ENCODE measurements at regions of chr3 and their contacts with region 1.

Region 1: DNA sequence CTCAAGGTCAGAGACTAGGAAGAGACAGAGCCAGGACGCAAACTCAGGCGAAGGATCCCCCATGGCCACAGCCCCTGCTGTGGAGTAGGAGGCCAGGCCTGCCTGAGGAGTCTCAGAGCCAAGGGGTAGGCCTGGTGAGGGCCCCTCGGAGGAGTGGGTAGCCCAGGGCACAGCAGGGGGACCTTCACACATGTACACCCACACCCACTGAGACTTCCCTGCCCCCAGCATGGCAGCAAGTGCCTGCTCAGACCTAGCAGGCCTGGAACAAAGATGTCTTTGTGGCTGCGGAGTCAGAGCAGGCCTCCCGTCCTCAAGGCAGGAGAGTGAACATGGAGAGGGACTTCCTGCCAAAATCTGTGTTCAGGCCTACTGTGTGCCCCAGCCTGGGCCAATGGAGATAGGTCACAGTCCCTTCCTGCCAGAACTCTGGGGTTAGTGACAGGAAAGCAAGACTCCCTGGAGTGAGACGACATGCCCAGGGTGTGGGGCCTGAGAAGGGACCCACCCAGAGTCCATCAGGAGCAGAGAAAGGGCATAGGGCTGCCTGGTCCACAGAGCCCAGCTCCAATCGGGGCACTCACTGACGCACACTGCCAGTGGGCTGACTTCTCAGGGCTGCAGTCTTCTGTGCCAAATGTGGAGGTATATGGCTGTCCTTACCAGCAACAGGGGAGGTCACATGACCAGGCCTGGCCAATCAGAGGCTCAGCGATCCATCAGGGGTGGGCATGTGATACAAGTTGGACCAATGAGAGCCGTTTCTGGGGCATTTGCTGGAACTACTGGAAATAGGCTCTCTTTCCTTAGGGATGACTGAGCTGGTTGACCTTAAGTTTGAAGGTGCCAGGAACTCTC is 2.3 kb downstream of the GRIP2 start:
- DNase-seq: no peak
- H3K4me3 ChIP-seq: no peak overlapping the region
- CTCF ChIP-seq: no peak

Region 2: GRCh38 chr3:14525685-14526631 is 11.9 kb before region 1 on chr3:
- CTCF ChIA-PET with region 1: interaction called, 11 read pairs
- POLR2A ChIA-PET with region 1: no interaction called
- DNase-seq: peak; percentile 10
- H3K4me3 ChIP-seq: no peak overlapping the region
- CTCF ChIP-seq: no peak

Measured in AG04449 (cell line).